PC-9 (cell line): ENCODE measurements at regions of chr3 and their contacts with region 1.

Region 1: DNA sequence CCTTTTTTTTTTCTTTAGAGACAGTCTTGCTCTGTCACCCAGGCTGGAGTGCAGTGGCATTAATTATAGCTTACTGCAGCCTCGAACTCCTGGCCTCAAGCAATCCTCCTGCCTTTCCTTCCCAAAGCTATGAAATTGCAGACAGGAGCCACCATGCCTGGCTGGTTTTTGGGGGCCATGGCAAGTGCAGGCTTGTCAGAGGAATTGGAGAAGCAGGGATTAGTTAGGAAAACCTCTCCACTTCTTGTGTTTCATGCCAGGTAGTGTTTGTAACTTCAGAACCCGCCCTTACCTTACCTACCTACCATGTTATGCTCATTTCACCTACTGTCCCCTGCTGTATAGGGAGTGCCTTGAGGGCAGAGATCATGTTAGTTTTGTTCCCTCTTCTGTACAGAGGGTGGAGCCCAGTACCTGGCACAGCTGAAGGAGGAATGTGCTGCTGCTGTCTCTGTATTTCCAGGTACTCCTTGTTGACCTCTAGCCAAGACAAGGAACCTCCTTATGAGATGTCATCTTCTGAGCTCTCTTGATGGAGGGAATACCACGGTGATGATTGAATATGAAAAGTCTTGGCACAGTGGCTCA is 43.8 kb downstream of the TRAK1 start:
- DNase-seq: peak; percentile 58 to 72
- H3K4me3 ChIP-seq: no peak overlapping the region
- H3K27ac ChIP-seq: peak overlapping the region; percentile 17; the same call in 1 of the 2 replicates
- H3K4me1 ChIP-seq: peaks cover 26% of the 10 kb centered on the region
- H3K27me3 ChIP-seq: no peaks in the 10 kb centered on the region
- CTCF ChIP-seq: no peak

Region 2: DNA sequence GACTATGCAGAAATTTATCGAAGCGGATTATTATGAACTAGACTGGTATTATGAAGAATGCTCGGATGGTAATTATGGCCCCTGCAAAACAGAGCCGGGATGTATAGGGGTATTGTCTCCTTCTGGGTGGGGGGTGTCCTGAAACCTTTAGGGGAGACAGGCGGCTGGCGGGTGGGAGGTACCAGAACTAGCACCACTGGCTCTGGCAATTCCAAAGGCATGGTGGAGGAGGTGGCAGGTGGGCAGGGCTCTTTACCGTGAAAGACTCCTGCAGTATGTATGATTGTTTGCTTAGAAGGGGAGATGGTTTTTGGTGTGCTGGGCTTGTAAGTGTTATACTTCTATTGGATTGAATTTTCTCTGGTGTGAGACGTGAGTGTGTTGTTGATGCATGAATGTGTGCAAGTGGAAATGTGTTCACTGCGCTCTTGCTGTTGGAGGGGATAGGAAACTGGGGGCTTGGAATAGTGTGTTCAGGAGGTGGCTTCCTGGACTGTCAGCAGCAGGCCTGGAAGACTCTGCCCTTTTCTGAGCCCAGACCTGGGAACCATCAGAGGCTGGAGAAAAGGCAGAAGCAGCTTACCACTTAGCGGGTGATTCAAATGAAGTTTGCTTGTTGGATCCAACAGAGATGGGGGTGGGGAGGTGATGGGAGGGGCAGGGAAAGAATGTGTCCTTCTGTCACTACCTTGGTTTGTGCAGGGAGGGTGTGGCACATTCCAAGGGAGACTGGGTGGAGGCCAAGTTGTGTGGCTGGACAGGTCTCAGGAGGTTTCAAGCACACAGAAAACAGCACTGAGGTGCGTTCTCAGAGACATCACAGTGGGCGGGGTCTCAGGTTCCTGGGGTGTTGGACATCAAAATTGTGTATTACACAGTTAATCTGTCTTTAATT is 14.8 kb after region 1 on chr3:
- CTCF ChIA-PET with region 1: no interaction called
- POLR2A ChIA-PET with region 1: no interaction called
- intact Hi-C with region 1: loop called (anchors 1 kb)
- DNase-seq: peak; percentile 89 to 91
- H3K4me3 ChIP-seq: no peak overlapping the region
- H3K27ac ChIP-seq: peak overlapping the region; percentile 82
- H3K4me1 ChIP-seq: peaks cover 29% of the 10 kb centered on the region
- H3K27me3 ChIP-seq: no peaks in the 10 kb centered on the region
- CTCF ChIP-seq: no peak

Region 3: DNA sequence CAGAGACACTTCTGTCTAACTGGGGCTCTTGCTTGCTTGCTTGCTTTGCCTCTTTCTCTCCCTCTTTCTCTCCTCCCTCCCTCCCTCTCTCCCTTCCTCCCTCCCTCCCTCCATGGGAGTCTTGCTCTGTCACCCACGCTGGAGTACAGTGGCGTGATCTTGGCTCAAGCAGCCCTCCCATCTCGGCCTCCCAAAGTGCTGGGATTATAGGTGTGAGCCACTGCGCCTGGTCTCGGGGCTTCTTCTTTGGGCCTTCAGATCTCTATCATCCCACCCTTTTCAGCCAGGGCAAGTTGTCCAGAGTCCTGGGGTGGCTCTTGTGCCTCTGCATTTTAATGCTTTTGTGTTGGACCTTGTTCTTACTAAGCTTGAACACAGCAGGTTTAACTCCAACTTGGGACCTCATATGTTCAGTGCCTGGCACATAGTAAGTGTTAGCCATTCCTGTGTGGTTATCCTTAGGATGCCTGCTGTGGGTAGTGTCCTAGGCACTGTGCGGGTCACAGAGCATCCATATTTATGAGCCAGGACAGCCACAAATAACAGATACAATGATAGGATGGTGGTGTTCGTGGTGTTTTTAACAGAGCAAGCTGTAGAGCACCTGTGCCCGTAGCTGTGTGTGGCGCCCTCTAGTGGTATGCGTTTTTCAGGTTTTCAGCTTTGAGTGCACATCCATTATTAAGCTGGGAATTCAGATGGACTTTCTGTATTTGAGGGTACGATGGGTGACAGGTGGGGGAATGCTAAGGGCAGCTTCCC is 55.9 kb after region 1 on chr3:
- CTCF ChIA-PET with region 1: interaction called, 10 read pairs
- POLR2A ChIA-PET with region 1: interaction called, 4 read pairs
- intact Hi-C with region 1: loop called (anchors 5 kb)
- DNase-seq: peak; percentile 45 to 66
- H3K4me3 ChIP-seq: no peak overlapping the region
- H3K27ac ChIP-seq: no peak overlapping the region
- H3K4me1 ChIP-seq: no peaks in the 10 kb centered on the region
- H3K27me3 ChIP-seq: no peaks in the 10 kb centered on the region
- CTCF ChIP-seq: peak; percentile 88